Posterior vena cava (tissue), 2 donors: ENCODE measurements at regions of chr1 and their contacts with region 1.

Region 1: GRCh38 chr1:10424034-10424433 is 6.2 kb upstream of the CENPS start:
- DNase-seq: peak; percentile 88

Region 2: GRCh38 chr1:12196641-12197482 is 1772.8 kb after region 1 on chr1:
- intact Hi-C with region 1: loop called in 1 of 2 experiments (anchors 5 kb)
- DNase-seq: peak; percentile 89